Activated T-helper 2 cell treated with anti-CD3 and anti-CD28 coated beads, Interferon-gamma antibody, Interleukin-2, Interleukin-4, amounts not matched to agents 10 μg/mL and 5 μg/mL and 100 μg/mL, durations not matched to agents 14 hours and 24 hours and 36 hours (primary cell): ENCODE measurements at regions of chr19 and their contacts with region 1.

Region 1: GRCh38 chr19:47013041-47013517 is 6.6 kb upstream of the NPAS1 start:
- DNase-seq: peak; percentile 46
- H3K4me3 Mint-ChIP-seq: no peak overlapping the region
- H3K27ac Mint-ChIP-seq: no peak overlapping the region
- H3K4me1 Mint-ChIP-seq: peaks cover 9% of the 10 kb centered on the region
- H3K27me3 Mint-ChIP-seq: peaks cover 5% of the 10 kb centered on the region

Region 2: GRCh38 chr19:47066376-47067214 is 53.5 kb after region 1 on chr19:
- intact Hi-C with region 1: loop called (anchors 5 kb)
- DNase-seq: no peak
- H3K4me3 Mint-ChIP-seq: no peak overlapping the region
- H3K27ac Mint-ChIP-seq: no peak overlapping the region
- H3K4me1 Mint-ChIP-seq: no peaks in the 10 kb centered on the region
- H3K27me3 Mint-ChIP-seq: no peaks in the 10 kb centered on the region

Region 3: DNA sequence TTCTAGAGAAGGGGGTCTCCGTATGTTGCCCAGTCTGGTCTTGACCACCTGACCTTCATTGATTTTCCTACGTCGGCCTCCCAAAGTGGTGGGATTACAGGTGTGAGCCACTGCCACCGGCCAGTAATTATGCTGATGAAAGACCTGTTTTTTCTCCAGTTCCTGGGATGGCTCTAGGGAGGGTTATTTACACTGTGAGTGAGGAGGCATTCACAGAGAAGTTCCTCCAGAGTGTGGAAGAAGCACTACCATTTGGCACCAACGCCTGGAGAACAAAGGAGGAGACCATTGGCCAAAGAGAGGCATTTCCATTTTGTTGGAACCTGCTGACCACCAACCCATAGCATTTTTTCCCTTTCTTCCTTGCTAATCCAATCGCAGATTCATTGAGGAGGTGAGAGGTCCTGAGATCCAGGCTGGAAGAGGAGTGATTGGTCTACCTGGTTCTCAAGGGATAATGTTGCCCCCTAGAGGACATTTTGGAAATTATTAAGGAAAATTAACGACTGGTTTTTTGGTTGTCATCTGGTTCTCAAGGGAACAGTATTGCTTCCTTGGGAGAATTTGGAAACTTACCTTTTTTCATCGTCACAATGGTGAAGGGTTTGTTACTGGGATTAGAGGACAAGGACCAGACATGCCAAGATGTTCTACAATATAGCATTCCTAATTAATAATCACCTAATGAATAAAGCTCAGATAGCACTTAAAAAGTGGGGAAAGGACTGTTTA is 112.0 kb after region 1 on chr19:
- intact Hi-C with region 1: no loop called
- DNase-seq: no peak
- H3K4me3 Mint-ChIP-seq: no peak overlapping the region
- H3K27ac Mint-ChIP-seq: no peak overlapping the region
- H3K4me1 Mint-ChIP-seq: peaks cover 5% of the 10 kb centered on the region
- H3K27me3 Mint-ChIP-seq: no peaks in the 10 kb centered on the region